ENCODE measurements at regions of chr7 and their contacts with region 1.

Region 1: DNA sequence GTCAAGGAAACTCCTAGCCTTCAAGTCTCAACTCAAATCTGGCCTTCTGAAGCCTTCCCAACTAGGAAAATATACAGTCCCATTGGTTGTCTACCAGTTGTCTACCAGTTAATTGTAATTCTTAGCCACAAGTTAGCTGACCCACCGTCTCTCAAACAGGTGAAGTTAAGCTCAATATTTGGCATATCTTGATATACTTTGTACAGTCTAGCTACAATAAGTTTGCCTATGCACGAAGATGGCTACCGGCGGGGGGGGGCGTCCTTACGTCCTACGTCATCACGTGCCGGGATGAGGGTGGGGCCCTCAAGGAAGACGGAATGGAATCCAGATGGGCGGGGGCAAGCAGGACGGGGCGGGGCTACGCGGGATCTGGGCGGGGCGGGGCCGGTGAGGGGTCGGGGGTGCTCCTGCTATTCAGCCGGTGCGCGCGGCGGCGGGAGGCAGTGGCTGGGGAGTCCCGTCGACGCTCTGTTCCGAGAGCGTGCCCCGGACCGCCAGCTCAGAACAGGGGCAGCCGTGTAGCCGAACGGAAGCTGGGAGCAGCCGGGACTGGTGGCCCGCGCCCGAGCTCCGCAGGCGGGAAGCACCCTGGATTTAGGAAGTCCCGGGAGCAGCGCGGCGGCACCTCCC is at the start of gene AHR:
- DNase-seq: peak; percentile 95 to 98 (median 97)
- ATAC-seq: peak; percentile 98
- H3K4me3 ChIP-seq: peak within 1 kb of the TSS; percentile 78
- H3K27ac ChIP-seq: peak within 1 kb of the TSS; percentile 80
- H3K4me1 ChIP-seq: no peaks in the 10 kb centered on the region
- H3K27me3 ChIP-seq: no peaks in the 10 kb centered on the region
- total RNA-seq, gene AHR: 17.4 to 30.3 (median 27.3) TPM

Region 2: DNA sequence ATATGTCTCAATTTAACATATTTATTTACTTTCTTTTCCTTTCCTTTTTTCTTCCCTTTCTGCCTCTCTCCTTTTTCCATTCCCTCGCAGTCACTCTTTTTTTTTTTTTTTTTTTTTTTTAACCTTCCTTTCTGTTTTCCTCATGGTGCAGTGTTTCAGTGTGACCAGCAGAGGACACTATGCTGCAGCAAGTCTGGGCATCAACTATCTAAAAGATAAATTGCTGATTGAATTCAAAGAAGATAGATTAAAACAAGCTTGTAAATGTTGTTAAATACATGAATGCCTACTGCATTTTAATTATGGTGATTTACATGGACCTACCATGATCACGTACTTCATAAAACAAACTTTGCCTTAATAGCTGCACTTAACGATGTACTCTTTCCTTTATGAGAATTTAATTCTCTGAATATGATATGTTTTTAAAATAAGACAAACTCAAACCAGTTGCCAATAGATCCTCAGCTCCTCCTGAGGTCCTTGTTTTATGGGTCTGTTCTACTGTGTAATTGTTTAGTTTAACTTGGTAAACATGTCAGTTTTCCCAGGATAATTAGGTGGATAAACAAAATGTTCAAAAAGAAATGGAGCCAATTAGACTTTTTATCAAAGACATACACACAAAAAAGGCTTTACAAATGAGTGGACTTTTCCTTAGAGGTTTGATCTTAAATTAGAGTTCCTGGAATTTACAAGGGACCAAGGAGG is 315.5 kb before region 1 on chr7:
- intact Hi-C with region 1: loop called in 2 of 4 experiments (anchors 10 kb)
- DNase-seq: no peak
- ATAC-seq: peak in 1 of 2 donors; percentile 45
- H3K4me3 ChIP-seq: no peak overlapping the region
- H3K27ac ChIP-seq: no peak overlapping the region
- H3K4me1 ChIP-seq: no peaks in the 10 kb centered on the region
- H3K27me3 ChIP-seq: no peaks in the 10 kb centered on the region

Region 3: DNA sequence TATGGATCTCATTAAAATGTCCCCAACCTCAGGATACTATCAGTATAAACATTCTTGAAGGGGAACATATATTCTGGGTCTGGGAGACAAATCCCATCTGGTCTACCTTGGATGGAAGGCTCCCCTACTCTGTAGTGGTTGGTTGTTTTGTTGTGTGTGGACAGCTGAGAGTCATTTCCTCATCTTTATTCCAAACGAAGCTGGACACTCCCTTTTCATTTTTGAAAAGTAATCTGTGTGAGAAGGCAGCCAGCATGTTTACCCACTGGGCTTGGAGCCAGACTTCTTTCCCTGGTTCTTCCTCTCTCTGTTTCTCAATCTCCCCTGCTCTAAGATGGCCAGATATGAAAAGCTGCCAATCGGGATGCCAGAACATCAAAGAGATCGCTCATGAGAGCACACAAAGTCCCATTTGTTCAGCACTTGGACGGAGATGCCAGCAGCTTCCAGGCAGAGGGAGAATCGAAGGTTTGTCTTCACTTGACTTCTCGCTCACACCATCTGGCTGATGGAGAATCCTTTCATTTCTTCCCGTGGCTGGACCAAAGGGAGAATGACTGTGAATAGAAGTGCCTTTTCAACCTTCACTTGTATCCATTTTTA is 308.4 kb before region 1 on chr7:
- intact Hi-C with region 1: loop called in 3 of 4 experiments (anchors 10 kb)
- DNase-seq: peak; percentile 65 to 75 (median 70)
- ATAC-seq: peak; percentile 90 to 91
- H3K4me3 ChIP-seq: peak overlapping the region; percentile 29
- H3K27ac ChIP-seq: peak overlapping the region; percentile 18
- H3K4me1 ChIP-seq: no peaks in the 10 kb centered on the region
- H3K27me3 ChIP-seq: no peaks in the 10 kb centered on the region

Region 4: GRCh38 chr7:17234398-17235031 is 63.8 kb before region 1 on chr7:
- intact Hi-C with region 1: loop called in 1 of 4 experiments (anchors 10 kb)
- DNase-seq: no peak
- ATAC-seq: peak; percentile 81
- H3K4me3 ChIP-seq: no peak overlapping the region
- H3K27ac ChIP-seq: no peak overlapping the region
- H3K4me1 ChIP-seq: peaks cover 5% of the 10 kb centered on the region
- H3K27me3 ChIP-seq: no peaks in the 10 kb centered on the region

Region 5: GRCh38 chr7:17255926-17256325 is 42.4 kb before region 1 on chr7:
- intact Hi-C with region 1: no loop called
- DNase-seq: no peak
- ATAC-seq: no peak
- H3K4me3 ChIP-seq: no peak overlapping the region
- H3K27ac ChIP-seq: no peak overlapping the region
- H3K4me1 ChIP-seq: no peaks in the 10 kb centered on the region
- H3K27me3 ChIP-seq: no peaks in the 10 kb centered on the region

Region 6: DNA sequence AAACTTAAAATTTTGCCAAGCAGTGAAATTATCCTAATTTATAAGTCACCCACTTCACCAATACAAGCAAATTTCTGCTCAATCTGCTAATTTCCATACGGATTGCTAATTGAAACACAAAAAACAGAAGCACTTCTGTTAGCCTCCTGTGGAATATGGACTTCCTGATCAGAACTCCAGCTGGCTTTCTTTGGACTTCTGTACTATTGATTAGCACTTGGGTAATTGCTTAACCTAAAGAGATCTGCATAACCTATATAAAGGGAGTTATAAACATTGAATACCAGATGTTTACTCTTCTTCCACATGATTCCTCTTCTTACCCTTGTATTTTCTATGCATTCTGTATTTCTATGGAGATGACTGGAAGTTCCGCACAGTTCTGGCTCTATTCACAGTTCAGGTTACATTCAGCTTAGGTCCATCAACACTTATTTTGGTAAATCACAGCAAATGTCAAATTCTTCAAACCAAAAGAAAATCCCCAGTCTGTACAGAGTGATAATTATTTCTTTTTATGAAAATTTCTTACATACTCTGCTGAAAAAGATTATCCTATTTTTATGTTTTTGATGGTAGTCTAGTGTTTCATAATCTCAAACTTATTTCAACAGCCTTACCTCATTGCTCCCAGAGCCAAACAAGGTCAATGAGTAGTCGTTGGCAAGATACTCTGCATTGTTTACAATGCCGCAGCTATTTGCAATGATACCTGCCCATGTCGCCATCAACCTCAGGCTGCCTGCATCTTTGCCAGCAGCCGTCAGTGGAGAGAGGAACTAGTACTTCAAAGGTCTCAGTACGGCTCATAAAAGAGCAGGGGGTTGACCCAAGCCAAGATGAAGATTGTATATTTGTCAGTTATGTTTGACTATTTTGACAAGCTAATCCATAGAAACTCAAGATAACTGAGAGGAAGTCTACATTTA is 225.8 kb after region 1 on chr7:
- intact Hi-C with region 1: loop called in 1 of 4 experiments (anchors 10 kb)
- DNase-seq: peak in 1 of 3 donors; percentile 44
- ATAC-seq: peak in 1 of 2 donors; percentile 41
- H3K4me3 ChIP-seq: no peak overlapping the region
- H3K27ac ChIP-seq: no peak overlapping the region
- H3K4me1 ChIP-seq: peaks cover 2% of the 10 kb centered on the region
- H3K27me3 ChIP-seq: no peaks in the 10 kb centered on the region

Region 7: GRCh38 chr7:17546599-17546998 is 248.3 kb after region 1 on chr7:
- intact Hi-C with region 1: loop called in 1 of 4 experiments (anchors 10 kb)
- DNase-seq: no peak
- ATAC-seq: peak; percentile 64 to 85
- H3K4me3 ChIP-seq: no peak overlapping the region
- H3K27ac ChIP-seq: no peak overlapping the region
- H3K4me1 ChIP-seq: peaks cover 3% of the 10 kb centered on the region
- H3K27me3 ChIP-seq: no peaks in the 10 kb centered on the region

Region 8: GRCh38 chr7:17640730-17641377 is 342.5 kb after region 1 on chr7:
- intact Hi-C with region 1: loop called in 2 of 4 experiments (anchors 10 kb)
- DNase-seq: no peak
- ATAC-seq: no peak
- H3K4me3 ChIP-seq: no peak overlapping the region
- H3K27ac ChIP-seq: no peak overlapping the region
- H3K4me1 ChIP-seq: no peaks in the 10 kb centered on the region
- H3K27me3 ChIP-seq: no peaks in the 10 kb centered on the region

Region 9: GRCh38 chr7:17663061-17663675 is 364.8 kb after region 1 on chr7:
- intact Hi-C with region 1: no loop called
- DNase-seq: no peak
- ATAC-seq: no peak
- H3K4me3 ChIP-seq: no peak overlapping the region
- H3K27ac ChIP-seq: no peak overlapping the region
- H3K4me1 ChIP-seq: peaks cover 3% of the 10 kb centered on the region
- H3K27me3 ChIP-seq: no peaks in the 10 kb centered on the region

Region 10: DNA sequence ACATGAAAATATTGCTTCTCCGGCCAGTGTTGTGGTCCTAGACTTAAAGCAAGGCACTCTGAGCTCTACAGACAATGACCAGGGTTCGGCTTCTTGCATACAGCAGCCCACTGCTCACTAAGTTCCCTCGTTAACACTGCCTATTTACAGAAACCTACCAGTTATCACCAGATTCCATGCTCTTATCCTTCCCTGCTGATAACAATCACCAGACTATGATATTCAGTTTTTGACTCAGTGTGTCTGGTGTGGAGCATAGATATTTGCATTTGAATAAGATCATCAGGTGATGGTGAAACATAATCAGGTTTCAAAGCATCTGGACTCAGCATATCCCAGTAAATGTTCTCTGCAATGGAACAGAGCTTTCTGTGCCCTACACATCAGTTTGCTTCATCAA is 459.7 kb after region 1 on chr7:
- intact Hi-C with region 1: no loop called
- DNase-seq: no peak
- ATAC-seq: no peak
- H3K4me3 ChIP-seq: no peak overlapping the region
- H3K27ac ChIP-seq: no peak overlapping the region
- H3K4me1 ChIP-seq: no peaks in the 10 kb centered on the region
- H3K27me3 ChIP-seq: no peaks in the 10 kb centered on the region